Activated CD4-positive, alpha-beta memory T cell treated with anti-CD3 and anti-CD28 coated beads, Interleukin-2, amount 10 ng/mL, durations not matched to agents 7 days and 5 days (primary cell): ENCODE measurements at regions of chrX and their contacts with region 1.

Region 1: DNA sequence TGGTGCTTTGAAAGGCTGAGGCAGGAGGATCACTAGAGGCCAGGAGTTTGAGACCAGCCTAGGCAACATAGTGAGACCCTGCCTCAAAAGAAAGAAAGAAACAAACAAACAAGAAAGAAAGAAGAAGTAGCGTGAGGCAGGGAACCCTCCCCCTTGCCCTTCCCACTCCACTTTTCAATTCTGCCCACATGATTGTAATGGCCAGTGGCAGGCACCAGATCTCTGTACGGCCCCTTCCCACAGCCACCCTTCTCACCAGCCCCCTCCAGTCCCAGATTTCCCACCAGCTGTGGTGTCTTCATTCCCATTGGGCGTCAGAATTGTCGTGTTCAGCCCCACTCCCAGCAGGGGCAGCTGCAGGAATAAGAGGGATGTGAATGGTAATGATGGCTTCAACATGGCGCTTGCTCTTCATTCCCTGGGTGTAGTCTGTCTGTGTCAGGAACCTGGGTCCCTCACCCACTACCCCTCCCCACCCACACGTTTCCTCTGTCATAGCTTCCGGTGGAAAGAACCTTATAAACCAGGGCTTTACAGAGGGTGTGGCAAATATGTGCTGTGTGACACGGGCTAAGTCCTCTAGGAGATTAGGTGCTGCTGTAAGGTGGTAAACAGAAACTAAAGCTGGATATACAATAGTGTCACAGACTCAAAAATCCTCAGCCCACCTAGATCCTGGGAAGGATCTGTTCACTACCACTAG is at the start of gene IL2RG:
- DNase-seq: peak; percentile 83
- H3K4me3 Mint-ChIP-seq: peak within 1 kb of the TSS; percentile 98
- H3K27ac Mint-ChIP-seq: peak within 1 kb of the TSS; percentile 99
- H3K4me1 Mint-ChIP-seq: peaks cover 39% of the 10 kb centered on the region
- H3K27me3 Mint-ChIP-seq: no peaks in the 10 kb centered on the region
- total RNA-seq, gene IL2RG: 633 to 637 TPM

Region 2: GRCh38 chrX:71095543-71095911 is 15.8 kb before region 1 on chrX and contains the start of gene FOXO4:
- CTCF ChIA-PET with region 1: interaction called, 15 read pairs
- POLR2A ChIA-PET with region 1: interaction called, 105 read pairs
- DNase-seq: peak; percentile 90
- H3K4me3 Mint-ChIP-seq: peak within 1 kb of the TSS; percentile 96
- H3K27ac Mint-ChIP-seq: peak within 1 kb of the TSS; percentile 66
- H3K4me1 Mint-ChIP-seq: peaks cover 32% of the 10 kb centered on the region
- H3K27me3 Mint-ChIP-seq: peaks cover 2% of the 10 kb centered on the region
- total RNA-seq, gene FOXO4: 18.4 to 20.4 TPM

Region 3: DNA sequence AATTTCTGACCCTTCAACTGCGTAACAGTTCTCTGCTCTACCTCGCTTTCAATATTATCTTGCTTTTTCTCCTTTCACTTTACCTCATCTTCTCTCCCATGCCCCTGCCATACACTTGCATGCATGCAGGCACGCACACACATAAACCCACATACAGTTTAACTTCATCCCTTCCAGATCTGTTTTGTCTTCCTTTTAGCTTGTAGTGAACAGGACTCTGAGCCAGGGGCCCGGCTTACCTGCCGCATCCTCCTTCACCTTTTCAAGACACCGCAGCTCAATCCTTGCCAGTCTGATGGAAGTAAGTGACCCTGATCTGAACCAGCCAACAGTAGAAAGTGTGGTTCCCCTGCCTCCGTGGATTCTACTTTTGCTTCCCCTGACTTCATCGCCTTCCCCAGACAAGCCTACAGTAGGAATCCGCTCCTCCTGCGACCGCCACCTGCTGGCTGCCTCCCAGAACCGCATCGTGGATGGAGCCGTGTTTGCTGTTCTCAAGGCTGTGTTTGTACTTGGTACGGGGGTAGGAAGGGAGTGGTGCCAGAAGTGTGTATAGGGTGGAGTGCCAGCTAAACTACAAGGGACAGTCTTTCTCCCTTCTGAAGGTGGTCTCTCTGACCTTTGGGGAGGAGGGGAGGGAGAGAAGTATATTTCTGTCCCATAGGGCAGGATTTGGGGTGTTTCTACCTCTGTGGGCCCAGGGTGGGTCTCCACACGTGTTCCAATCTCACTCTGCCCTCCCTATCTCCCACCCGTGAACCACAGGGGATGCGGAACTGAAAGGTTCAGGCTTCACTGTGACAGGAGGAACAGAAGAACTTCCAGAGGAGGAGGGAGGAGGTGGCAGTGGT is 17.8 kb after region 1 on chrX:
- CTCF ChIA-PET with region 1: interaction called, 10 read pairs
- POLR2A ChIA-PET with region 1: interaction called, 9 read pairs
- DNase-seq: peak; percentile 77
- H3K4me3 Mint-ChIP-seq: no peak overlapping the region
- H3K27ac Mint-ChIP-seq: peak overlapping the region; percentile 16
- H3K4me1 Mint-ChIP-seq: peaks cover 16% of the 10 kb centered on the region
- H3K27me3 Mint-ChIP-seq: no peaks in the 10 kb centered on the region